ENCODE measurements at regions of chr10 and their contacts with region 1.

Region 1: DNA sequence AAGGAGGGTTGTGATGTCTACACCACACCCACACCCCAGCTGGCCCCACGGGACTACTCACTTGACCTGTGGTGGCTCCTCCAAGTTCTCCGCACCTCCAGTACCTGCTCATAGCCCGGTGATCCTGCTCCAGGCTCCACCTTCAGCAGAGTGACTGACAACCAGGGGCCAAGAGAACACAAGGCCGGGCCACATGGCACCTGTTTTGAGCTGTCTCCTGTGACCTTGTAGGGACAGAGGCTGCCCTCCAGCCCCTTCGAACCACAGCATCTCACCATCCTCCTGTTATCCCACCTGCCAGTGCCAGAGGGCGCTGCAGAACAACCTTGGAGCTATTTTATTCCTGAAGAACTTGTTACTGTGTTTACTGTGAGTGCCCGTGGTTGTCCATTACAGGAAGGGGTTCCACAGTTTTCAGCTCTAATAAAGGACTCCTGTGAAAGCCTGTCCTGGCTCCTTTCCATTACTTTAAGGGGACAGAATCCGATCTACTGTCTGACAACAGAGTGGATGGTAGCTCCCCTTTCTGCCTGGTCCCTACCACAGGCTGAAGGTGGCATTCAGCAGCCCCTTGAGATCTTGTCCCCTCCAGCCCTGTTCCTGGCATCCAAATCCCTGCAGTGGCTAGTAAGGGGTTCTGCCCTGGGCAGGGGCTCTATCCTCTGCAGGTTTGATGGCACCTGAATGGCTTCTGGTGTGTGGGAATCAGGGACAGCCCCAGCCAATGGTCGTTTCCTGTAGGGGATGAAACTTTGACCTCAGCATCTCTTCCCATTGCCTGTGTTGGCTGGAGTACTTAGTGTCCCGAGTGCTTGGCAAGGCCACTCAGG is 50.8 kb downstream of the C10orf120 start:
- DNase-seq: peak; percentile 45 to 81 (median 76)
- ATAC-seq: peak; percentile 84 to 97 (median 92)
- H3K4me3 ChIP-seq: no peak overlapping the region
- H3K27ac ChIP-seq: no peak overlapping the region
- H3K4me1 ChIP-seq: peaks cover 0 to 6% (median 0%) of the 10 kb centered on the region in 3 donors
- H3K27me3 ChIP-seq: no peaks in the 10 kb centered on the region
- CTCF ChIP-seq: peak; percentile 71 to 82 (median 78)

Region 2: DNA sequence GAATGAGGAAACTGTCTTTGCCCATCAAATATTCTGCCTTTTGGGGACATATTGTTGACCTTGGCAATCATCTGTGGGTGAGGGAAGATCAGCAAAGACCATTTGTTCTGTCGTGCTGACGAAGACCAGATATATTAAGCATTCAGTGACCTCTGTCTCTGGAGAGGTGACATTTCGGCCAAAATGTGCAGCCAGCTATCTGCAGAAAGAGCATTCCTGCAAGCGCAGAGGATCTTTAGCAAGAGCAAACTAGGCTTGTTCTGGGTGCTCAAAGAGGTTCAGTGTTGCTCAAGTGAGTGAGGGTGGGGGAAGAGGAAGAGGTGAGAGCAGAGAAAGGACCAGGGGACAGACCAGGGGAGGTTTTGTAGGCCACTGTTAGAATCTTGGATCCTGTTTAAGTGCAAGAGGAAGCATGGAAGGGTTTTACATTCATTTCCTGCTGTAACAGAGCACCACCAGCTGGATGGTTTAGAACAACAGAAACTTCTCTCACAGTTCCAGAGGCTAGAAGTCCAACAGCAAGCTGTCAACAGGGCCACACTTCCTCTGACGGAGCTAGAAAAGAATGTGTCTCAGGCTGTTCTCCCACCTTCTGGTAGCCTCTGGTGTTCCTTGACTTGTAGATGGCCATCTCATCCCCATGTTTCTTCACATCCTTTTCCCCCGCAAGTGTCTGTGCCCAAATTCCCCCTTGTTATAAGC is 39.6 kb after region 1 on chr10:
- intact Hi-C with region 1: loop called in 1 of 3 experiments (anchors 5 kb)
- DNase-seq: peak in 2 of 6 donors; percentile 32 to 46
- ATAC-seq: peak; percentile 66 to 90 (median 82)
- H3K4me3 ChIP-seq: no peak overlapping the region
- H3K27ac ChIP-seq: peak overlapping the region; percentile 33 to 85 (median 60)
- H3K4me1 ChIP-seq: peaks cover 0 to 26% (median 14%) of the 10 kb centered on the region in 3 donors
- H3K27me3 ChIP-seq: no peaks in the 10 kb centered on the region
- CTCF ChIP-seq: no peak

Measured in pancreas (tissue), 10 donors.